Breast epithelium (tissue), 4 donors: ENCODE measurements at regions of chr14 and their contacts with region 1.

Region 1: DNA sequence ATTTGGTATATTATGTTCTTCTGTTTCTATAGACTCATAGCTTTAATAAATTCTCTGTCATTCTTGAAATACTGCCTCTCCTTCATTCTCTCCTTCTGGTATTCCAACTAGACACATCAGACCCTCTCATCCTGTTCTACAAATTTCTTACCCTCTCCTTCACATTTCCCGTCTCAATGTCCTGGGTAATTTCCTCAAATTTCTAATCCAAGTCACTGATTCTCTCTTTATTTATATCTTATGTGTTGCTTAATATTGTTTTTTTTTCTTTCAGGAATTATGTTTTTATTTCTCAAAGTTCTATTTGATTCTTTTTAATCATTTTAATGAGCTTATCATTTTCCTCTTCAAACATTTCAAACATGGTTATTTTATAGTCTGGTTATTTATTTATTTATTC is 94.0 kb downstream of the RALGAPA1 start:
- DNase-seq: no peak
- H3K4me3 ChIP-seq: no peak overlapping the region
- H3K27ac ChIP-seq: no peak overlapping the region
- H3K4me1 ChIP-seq: no peaks in the 10 kb centered on the region
- H3K27me3 ChIP-seq: no peaks in the 10 kb centered on the region
- CTCF ChIP-seq: no peak
- POLR2A ChIP-seq: no peak

Region 2: GRCh38 chr14:35347323-35348043 is 367.6 kb before region 1 on chr14:
- intact Hi-C with region 1: loop called (anchors 5 kb)
- DNase-seq: no peak
- H3K4me3 ChIP-seq: no peak overlapping the region
- H3K27ac ChIP-seq: no peak overlapping the region
- H3K4me1 ChIP-seq: peaks cover under 1 to 4% of the 10 kb centered on the region in 2 donors
- H3K27me3 ChIP-seq: no peaks in the 10 kb centered on the region
- CTCF ChIP-seq: no peak
- POLR2A ChIP-seq: no peak

Region 3: GRCh38 chr14:35565871-35566464 is 149.1 kb before region 1 on chr14:
- intact Hi-C with region 1: no loop called
- DNase-seq: no peak
- H3K4me3 ChIP-seq: no peak overlapping the region
- H3K27ac ChIP-seq: no peak overlapping the region
- H3K4me1 ChIP-seq: no peaks in the 10 kb centered on the region
- H3K27me3 ChIP-seq: no peaks in the 10 kb centered on the region
- CTCF ChIP-seq: no peak
- POLR2A ChIP-seq: no peak

Region 4: GRCh38 chr14:35730871-35731270 is 15.8 kb after region 1 on chr14:
- intact Hi-C with region 1: no loop called
- DNase-seq: no peak
- H3K4me3 ChIP-seq: no peak overlapping the region
- H3K27ac ChIP-seq: no peak overlapping the region
- H3K4me1 ChIP-seq: no peaks in the 10 kb centered on the region
- H3K27me3 ChIP-seq: no peaks in the 10 kb centered on the region
- CTCF ChIP-seq: no peak
- POLR2A ChIP-seq: no peak